ENCODE measurements at regions of chr9 and their contacts with region 1.

Region 1: GRCh38 chr9:86354011-86354817 is at the start of gene TUT7:
- DNase-seq: peak; percentile 95
- H3K4me3 ChIP-seq: peak within 1 kb of the TSS; percentile 85 to 93
- H3K27ac ChIP-seq: peak within 1 kb of the TSS; percentile 93 to 97
- H3K4me1 ChIP-seq: no peaks in the 10 kb centered on the region
- H3K27me3 ChIP-seq: no peaks in the 10 kb centered on the region
- CTCF ChIP-seq: peak in 1 of 4 experiments; percentile 12
- POLR2A ChIP-seq: peak; percentile 83
- total RNA-seq, gene TUT7: 44.0 to 112 TPM

Region 2: GRCh38 chr9:86282077-86282978 is 71.9 kb before region 1 on chr9 and contains the start of gene ISCA1:
- intact Hi-C with region 1: loop called (anchors 5 kb)
- DNase-seq: peak; percentile 94
- H3K4me3 ChIP-seq: peak within 1 kb of the TSS; percentile 81 to 93
- H3K27ac ChIP-seq: peak within 1 kb of the TSS; percentile 92 to 97
- H3K4me1 ChIP-seq: peaks cover 3% of the 10 kb centered on the region
- H3K27me3 ChIP-seq: no peaks in the 10 kb centered on the region
- CTCF ChIP-seq: no peak
- POLR2A ChIP-seq: peak; percentile 93
- total RNA-seq, gene ISCA1: 39.4 to 51.9 TPM

Region 3: GRCh38 chr9:86454661-86455615 is 100.7 kb after region 1 on chr9:
- intact Hi-C with region 1: no loop called
- DNase-seq: no peak
- H3K4me3 ChIP-seq: no peak overlapping the region
- H3K27ac ChIP-seq: peak overlapping the region in 1 of 2 donors; percentile 18
- H3K4me1 ChIP-seq: no peaks in the 10 kb centered on the region
- H3K27me3 ChIP-seq: no peaks in the 10 kb centered on the region
- CTCF ChIP-seq: no peak
- POLR2A ChIP-seq: no peak

Measured in prostate gland (tissue), 2 donors.